ENCODE measurements at regions of chr6 and their contacts with region 1.

Region 1: GRCh38 chr6:105087571-105088211 is 92.1 kb downstream of the POPDC3 start:
- DNase-seq: peak in 2 of 4 donors; percentile 49 to 77
- ATAC-seq: peak; percentile 86
- H3K4me3 ChIP-seq: no peak overlapping the region
- H3K27ac ChIP-seq: no peak overlapping the region
- H3K4me1 ChIP-seq: no peaks in the 10 kb centered on the region
- H3K27me3 ChIP-seq: no peaks in the 10 kb centered on the region
- CTCF ChIP-seq: peak; percentile 63 to 70

Region 2: DNA sequence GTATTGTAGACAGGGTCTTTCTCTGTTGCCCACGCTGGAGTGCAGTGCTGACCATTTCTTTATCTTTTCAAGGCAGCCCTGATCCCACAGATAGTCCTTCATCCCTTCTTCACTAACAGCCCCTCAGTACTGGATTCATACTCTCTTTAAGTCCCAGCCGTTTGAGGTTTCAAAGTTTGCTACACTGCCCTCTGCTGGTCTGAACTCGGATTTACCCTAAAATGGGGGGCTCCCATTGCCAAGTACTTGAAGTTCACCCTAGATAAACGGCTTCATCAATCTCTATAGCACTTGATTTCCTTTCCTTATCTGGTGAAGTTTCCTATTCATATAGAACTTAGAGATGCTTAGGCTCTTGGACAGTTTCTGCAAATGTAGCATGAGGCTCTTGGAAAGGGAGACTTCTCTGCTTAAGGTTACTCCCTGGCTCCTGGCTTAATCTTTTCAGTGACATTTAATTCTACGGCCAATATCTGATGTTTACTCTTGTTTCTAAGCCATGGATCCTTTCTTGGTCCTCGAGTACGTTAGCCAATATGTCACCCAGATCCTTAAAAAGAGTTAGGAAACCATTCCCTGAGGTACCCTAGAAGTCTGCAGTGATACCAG is 336.6 kb after region 1 on chr6:
- intact Hi-C with region 1: loop called in 1 of 2 experiments (anchors 5 kb)
- DNase-seq: peak in 2 of 4 donors; percentile 26 to 50
- ATAC-seq: peak; percentile 65
- H3K4me3 ChIP-seq: no peak overlapping the region
- H3K27ac ChIP-seq: no peak overlapping the region
- H3K4me1 ChIP-seq: no peaks in the 10 kb centered on the region
- H3K27me3 ChIP-seq: no peaks in the 10 kb centered on the region
- CTCF ChIP-seq: peak; percentile 60 to 67